ENCODE measurements at regions of chr10 and their contacts with region 1.

Region 1: GRCh38 chr10:12264204-12264940 is 68.4 kb downstream of the CDC123 start:
- DNase-seq: peak; percentile 12
- ATAC-seq: peak; percentile 81
- H3K4me3 ChIP-seq: no peak overlapping the region
- H3K27ac ChIP-seq: no peak overlapping the region
- H3K4me1 ChIP-seq: peaks cover 34% of the 10 kb centered on the region
- H3K27me3 ChIP-seq: no peaks in the 10 kb centered on the region; a peak in 1 of 5 replicates
- CTCF ChIP-seq: peak; percentile 86
- EP300 ChIP-seq: no peak
- POLR2A ChIP-seq: no peak
- RAD21 ChIP-seq: peak; percentile 81

Region 2: DNA sequence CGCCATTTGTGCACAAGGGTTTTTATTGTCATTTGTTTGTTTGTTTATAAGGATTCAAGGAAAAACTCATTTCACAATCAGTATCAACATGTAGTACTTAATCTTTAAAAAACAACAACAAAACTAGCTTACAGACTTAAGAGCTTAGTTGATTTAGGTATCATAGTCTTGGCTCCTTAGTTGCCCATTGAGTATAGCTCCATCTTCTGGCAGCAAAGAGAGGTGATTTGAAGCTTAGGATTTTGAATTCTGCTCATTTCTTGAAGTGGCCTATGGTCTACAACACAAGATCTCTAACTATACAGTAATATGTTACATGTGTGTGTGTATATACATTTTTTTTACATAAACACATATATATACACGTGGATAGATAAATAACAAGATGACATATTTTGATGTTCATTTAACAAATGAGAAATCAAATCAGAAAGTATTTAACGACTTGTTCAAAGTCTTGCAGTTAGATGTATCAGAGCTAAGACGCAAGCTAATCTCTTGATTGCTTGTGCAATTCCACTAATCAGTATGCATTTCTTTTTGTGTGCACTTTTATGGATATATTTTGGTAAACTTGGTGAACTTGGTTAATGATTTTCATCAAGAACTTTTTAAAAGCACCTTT is 392.3 kb after region 1 on chr10:
- CTCF ChIA-PET with region 1: interaction called, 10 read pairs
- POLR2A ChIA-PET with region 1: interaction called, 3 read pairs
- in situ Hi-C with region 1: loop called (anchors 10 kb)
- intact Hi-C with region 1: loop called (anchors 1 kb)
- DNase-seq: peak; percentile 37
- ATAC-seq: peak; percentile 60
- H3K4me3 ChIP-seq: no peak overlapping the region
- H3K27ac ChIP-seq: no peak overlapping the region
- H3K4me1 ChIP-seq: no peaks in the 10 kb centered on the region
- H3K27me3 ChIP-seq: no peaks in the 10 kb centered on the region; a peak in 1 of 5 replicates
- CTCF ChIP-seq: peak; percentile 76
- EP300 ChIP-seq: no peak
- POLR2A ChIP-seq: no peak
- RAD21 ChIP-seq: no peak

Measured in HepG2 (cell line).